Gastrocnemius medialis (tissue), 4 donors: ENCODE measurements at regions of chr11 and their contacts with region 1.

Region 1: GRCh38 chr11:94342250-94342649 is 37.9 kb downstream of the IZUMO1R start:
- DNase-seq: no peak
- ATAC-seq: no peak
- H3K4me3 ChIP-seq: no peak overlapping the region
- H3K27ac ChIP-seq: no peak overlapping the region
- H3K4me1 ChIP-seq: no peaks in the 10 kb centered on the region
- H3K27me3 ChIP-seq: no peaks in the 10 kb centered on the region
- CTCF ChIP-seq: no peak
- POLR2A ChIP-seq: no peak

Region 2: GRCh38 chr11:94954753-94955152 is 612.5 kb after region 1 on chr11:
- in situ Hi-C with region 1: no loop called
- intact Hi-C with region 1: loop called (anchors 5 kb)
- DNase-seq: no peak
- ATAC-seq: no peak
- H3K4me3 ChIP-seq: no peak overlapping the region
- H3K27ac ChIP-seq: no peak overlapping the region
- H3K4me1 ChIP-seq: no peaks in the 10 kb centered on the region
- H3K27me3 ChIP-seq: no peaks in the 10 kb centered on the region
- CTCF ChIP-seq: no peak
- POLR2A ChIP-seq: no peak

Region 3: DNA sequence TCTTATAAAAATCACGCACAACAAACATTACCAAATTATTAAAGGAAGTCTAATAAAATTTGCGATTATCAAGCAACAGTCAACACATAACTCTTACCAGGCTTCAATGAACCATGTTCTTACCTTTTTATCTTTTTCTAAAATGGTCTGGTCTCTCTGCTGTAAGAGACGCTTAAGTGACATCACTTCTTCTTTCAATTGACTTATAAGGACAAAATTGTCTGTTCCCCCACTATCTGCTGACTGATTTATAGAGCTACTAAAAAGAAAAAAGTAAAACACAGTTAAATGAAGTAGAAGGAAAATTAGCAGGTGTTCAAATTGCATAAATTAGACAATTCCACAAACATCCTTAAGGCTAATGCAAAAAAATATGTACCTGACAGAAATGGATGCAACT is 1436.4 kb after region 1 on chr11:
- in situ Hi-C with region 1: no loop called
- intact Hi-C with region 1: no loop called
- DNase-seq: no peak
- ATAC-seq: no peak
- H3K4me3 ChIP-seq: no peak overlapping the region
- H3K27ac ChIP-seq: no peak overlapping the region
- H3K4me1 ChIP-seq: no peaks in the 10 kb centered on the region
- H3K27me3 ChIP-seq: no peaks in the 10 kb centered on the region
- CTCF ChIP-seq: no peak
- POLR2A ChIP-seq: no peak